ENCODE measurements at regions of chr2 and their contacts with region 1.

Region 1: GRCh38 chr2:38315707-38316333 is 61.3 kb downstream of the ATL2 start:
- DNase-seq: peak; percentile 70

Region 2: GRCh38 chr2:37851828-37852584 is 463.8 kb before region 1 on chr2:
- in situ Hi-C with region 1: no loop called
- DNase-seq: no peak

Region 3: GRCh38 chr2:38508311-38509039 is 192.7 kb after region 1 on chr2:
- in situ Hi-C with region 1: loop called (anchors 25 kb)
- DNase-seq: peak; percentile 89

Region 4: GRCh38 chr2:38740851-38741731 is 425.3 kb after region 1 on chr2:
- in situ Hi-C with region 1: loop called (anchors 25 kb)
- DNase-seq: peak; percentile 85